CD8-positive, alpha-beta memory T cell (primary cell): ENCODE measurements at regions of chr16 and their contacts with region 1.

Region 1: DNA sequence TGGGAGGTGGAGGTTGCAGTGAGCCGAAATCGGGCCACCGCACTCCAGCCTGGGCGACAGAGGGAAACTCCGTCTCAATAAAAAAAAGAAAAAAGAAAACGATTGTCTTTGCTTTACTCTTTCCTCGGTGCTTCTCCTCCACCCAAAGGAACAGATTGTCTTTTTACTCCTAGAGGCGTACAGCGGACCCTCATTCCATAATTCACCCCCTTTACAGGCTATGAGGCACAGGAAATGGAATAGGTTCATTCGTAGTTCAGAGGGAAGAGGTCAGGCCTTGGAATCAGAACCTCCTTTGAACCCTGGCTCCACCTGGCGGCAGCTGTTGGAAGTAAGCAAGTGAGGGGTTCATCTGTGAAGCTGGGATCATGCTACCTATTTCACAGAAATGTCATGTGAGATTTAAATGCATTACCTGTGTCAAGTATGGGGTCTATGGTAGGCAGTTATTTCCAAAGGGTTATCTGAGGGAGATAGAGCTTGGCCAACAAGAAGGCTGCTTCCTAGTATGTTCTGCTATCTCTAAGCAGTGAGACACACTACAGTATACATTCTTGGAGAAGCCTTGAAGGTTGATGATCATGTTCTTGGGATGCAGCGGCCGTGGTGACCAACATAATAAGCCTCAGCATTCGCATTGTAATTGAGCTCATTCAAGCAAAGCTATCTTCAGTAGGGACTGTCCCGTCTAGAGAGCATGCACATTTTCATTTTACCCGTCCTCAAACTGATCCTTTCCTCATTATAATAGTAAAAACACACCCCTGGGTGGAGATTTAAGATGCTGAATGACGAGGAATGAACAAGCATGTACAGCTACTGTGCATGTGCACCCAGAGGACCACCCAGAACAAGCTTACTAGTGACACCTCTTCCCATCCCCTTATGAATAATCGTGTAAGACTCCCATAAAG is 18.7 kb upstream of the ZNF689 start:
- DNase-seq: peak; percentile 62 to 88 (median 79)
- H3K4me3 ChIP-seq: peak overlapping the region; percentile 51
- H3K4me3 Mint-ChIP-seq: peak overlapping the region; percentile 44 to 78 (median 63)
- H3K27ac ChIP-seq: no peak overlapping the region
- H3K27ac Mint-ChIP-seq: peak overlapping the region in 7 of 8 donors; percentile 30 to 92 (median 65)
- H3K4me1 ChIP-seq: peaks cover 15% of the 10 kb centered on the region
- H3K4me1 Mint-ChIP-seq: peaks cover 4 to 8% (median 7%) of the 10 kb centered on the region in 3 donors
- H3K27me3 ChIP-seq: no peaks in the 10 kb centered on the region
- H3K27me3 Mint-ChIP-seq: peaks cover 0 to under 1% of the 10 kb centered on the region in 2 donors

Region 2: GRCh38 chr16:30519120-30520049 is 109.5 kb before region 1 on chr16:
- CTCF ChIA-PET with region 1: no interaction called
- POLR2A ChIA-PET with region 1: no interaction called
- DNase-seq: peak in 1 of 5 donors; percentile 16
- H3K4me3 ChIP-seq: no peak overlapping the region
- H3K4me3 Mint-ChIP-seq: peak overlapping the region in 5 of 7 donors; percentile 8 to 59 (median 15)
- H3K27ac ChIP-seq: no peak overlapping the region
- H3K27ac Mint-ChIP-seq: peak overlapping the region; percentile 20 to 94 (median 65)
- H3K4me1 ChIP-seq: no peaks in the 10 kb centered on the region
- H3K4me1 Mint-ChIP-seq: peaks cover 13 to 29% (median 20%) of the 10 kb centered on the region in 3 donors
- H3K27me3 ChIP-seq: no peaks in the 10 kb centered on the region
- H3K27me3 Mint-ChIP-seq: peaks cover 0 to 1% of the 10 kb centered on the region in 2 donors

Region 3: GRCh38 chr16:30615358-30616091 is 13.4 kb before region 1 on chr16:
- CTCF ChIA-PET with region 1: interaction called, 24 read pairs
- POLR2A ChIA-PET with region 1: interaction called, 5 read pairs
- DNase-seq: peak; percentile 50 to 79 (median 61)
- H3K4me3 ChIP-seq: no peak overlapping the region
- H3K4me3 Mint-ChIP-seq: peak overlapping the region in 1 of 7 donors; percentile 6
- H3K27ac ChIP-seq: no peak overlapping the region
- H3K27ac Mint-ChIP-seq: no peak overlapping the region
- H3K4me1 ChIP-seq: no peaks in the 10 kb centered on the region
- H3K4me1 Mint-ChIP-seq: peaks cover 1 to 3% (median 2%) of the 10 kb centered on the region in 3 donors
- H3K27me3 ChIP-seq: no peaks in the 10 kb centered on the region
- H3K27me3 Mint-ChIP-seq: peaks cover 0 to 5% of the 10 kb centered on the region in 2 donors

Region 4: DNA sequence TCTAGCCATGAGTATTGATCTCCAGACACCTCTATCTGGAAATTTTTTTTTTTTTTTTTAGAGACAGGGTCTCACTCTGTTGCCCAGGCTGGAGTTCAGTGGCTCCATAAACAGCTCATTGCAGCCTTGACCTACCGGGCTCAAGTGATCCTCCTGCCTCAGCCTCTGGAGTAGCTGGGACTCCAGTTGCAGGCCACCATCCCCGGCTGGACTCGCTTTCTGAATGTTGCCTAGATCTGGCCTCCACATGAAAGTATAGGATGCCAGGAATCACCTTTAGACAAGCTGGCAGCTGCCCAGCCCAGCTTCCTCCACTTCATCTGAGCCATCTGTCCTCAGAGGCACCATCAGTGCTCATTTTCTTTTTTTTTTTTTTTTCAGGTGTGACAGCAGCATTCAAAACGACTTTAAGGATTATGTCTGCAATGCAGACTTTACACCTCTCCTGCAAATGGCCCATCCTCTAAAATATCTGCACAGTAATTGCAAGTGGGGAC is 15.5 kb after region 1 on chr16:
- CTCF ChIA-PET with region 1: no interaction called
- POLR2A ChIA-PET with region 1: no interaction called
- DNase-seq: no peak
- H3K4me3 ChIP-seq: no peak overlapping the region
- H3K4me3 Mint-ChIP-seq: no peak overlapping the region
- H3K27ac ChIP-seq: no peak overlapping the region
- H3K27ac Mint-ChIP-seq: no peak overlapping the region
- H3K4me1 ChIP-seq: peaks cover 1% of the 10 kb centered on the region
- H3K4me1 Mint-ChIP-seq: peaks cover 0 to 2% (median 0%) of the 10 kb centered on the region in 3 donors
- H3K27me3 ChIP-seq: no peaks in the 10 kb centered on the region
- H3K27me3 Mint-ChIP-seq: no peaks in the 10 kb centered on the region

Region 5: DNA sequence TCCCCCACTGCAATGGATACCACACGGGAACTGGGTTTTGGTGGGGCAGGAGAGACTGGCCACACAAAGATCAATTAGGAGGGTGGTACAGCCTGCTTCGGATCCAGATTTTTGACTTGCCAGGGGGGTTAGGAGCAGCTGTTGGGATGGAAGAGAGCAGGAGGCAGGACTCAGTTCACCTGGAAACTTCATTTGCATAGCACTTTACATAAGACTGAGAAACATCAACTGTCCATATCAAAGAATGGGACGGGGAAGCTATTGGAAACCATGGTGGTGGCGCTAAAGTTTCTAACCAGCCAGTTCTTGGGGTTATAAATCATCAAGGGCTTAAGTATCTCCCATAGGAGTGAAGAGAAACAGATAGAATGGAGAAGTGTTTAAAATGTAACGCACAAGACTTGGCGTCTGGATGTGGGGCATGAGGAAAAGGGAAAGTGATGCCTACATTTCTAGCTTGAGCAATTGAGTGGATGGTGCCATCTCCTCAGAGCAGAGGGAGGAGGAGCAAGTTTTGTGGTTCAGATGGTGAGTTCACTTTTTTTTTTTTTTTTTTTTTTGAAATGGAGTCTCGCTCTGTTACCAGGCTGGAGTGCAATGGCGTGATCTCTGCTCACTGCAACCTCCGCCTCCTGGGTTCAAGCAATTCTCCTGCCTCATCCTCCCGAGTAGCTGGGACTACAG is 63.6 kb after region 1 on chr16:
- CTCF ChIA-PET with region 1: interaction called, 11 read pairs
- POLR2A ChIA-PET with region 1: no interaction called
- DNase-seq: no peak
- H3K4me3 ChIP-seq: no peak overlapping the region
- H3K4me3 Mint-ChIP-seq: no peak overlapping the region
- H3K27ac ChIP-seq: no peak overlapping the region
- H3K27ac Mint-ChIP-seq: peak overlapping the region in 2 of 8 donors; percentile 51 to 83
- H3K4me1 ChIP-seq: peaks cover 12% of the 10 kb centered on the region
- H3K4me1 Mint-ChIP-seq: peaks cover 11 to 20% (median 14%) of the 10 kb centered on the region in 3 donors
- H3K27me3 ChIP-seq: no peaks in the 10 kb centered on the region
- H3K27me3 Mint-ChIP-seq: no peaks in the 10 kb centered on the region